ENCODE measurements at regions of chr6 and their contacts with region 1.

Region 1: DNA sequence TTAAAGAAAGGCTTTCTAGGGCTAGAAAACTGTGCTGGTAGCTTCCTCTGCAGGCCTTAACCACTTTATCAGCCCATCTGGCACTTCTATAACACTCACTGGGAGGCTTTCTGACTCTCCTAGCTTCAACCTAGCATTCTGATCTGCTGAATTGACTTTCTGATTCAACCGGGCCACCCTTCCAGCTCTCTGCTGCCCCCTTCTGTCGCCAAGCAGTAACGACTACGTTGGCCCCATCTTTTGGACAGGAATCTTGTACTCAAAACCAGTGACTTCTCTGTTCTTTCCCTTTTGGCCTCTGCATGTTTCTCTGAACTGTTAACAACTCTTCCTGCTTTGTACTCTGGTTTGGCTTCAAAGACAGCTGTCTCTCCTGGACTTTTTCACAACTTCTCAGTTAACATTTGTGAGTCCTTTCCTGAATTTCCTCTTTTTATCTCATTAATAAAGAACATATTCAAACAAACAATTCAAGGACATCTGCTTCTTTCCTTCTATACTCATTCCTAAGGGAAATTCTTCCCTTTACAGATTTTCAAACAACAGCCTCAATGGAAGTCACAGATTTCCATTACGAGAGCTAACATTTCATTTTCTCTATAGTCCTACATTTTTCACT is 43.9 kb upstream of the FAM135A start:
- DNase-seq: peak; percentile 60 to 84 (median 66)
- ATAC-seq: peak; percentile 71 to 98 (median 92)
- H3K4me3 ChIP-seq: no peak overlapping the region
- H3K27ac ChIP-seq: no peak overlapping the region
- H3K4me1 ChIP-seq: peaks cover 4 to 6% (median 5%) of the 10 kb centered on the region in 3 donors
- H3K27me3 ChIP-seq: no peaks in the 10 kb centered on the region
- CTCF ChIP-seq: peak; percentile 76 to 88 (median 79)

Region 2: GRCh38 chr6:70310063-70310694 is 59.3 kb before region 1 on chr6:
- intact Hi-C with region 1: loop called in 1 of 3 experiments (anchors 5 kb)
- DNase-seq: no peak
- ATAC-seq: peak in 3 of 4 donors; percentile 65 to 73 (median 69)
- H3K4me3 ChIP-seq: no peak overlapping the region
- H3K27ac ChIP-seq: no peak overlapping the region
- H3K4me1 ChIP-seq: no peaks in the 10 kb centered on the region
- H3K27me3 ChIP-seq: no peaks in the 10 kb centered on the region
- CTCF ChIP-seq: peak in 3 of 4 donors; percentile 50 to 61 (median 53)

Measured in pancreas (tissue), 10 donors.